ENCODE measurements at regions of chr18 and their contacts with region 1.

Region 1: DNA sequence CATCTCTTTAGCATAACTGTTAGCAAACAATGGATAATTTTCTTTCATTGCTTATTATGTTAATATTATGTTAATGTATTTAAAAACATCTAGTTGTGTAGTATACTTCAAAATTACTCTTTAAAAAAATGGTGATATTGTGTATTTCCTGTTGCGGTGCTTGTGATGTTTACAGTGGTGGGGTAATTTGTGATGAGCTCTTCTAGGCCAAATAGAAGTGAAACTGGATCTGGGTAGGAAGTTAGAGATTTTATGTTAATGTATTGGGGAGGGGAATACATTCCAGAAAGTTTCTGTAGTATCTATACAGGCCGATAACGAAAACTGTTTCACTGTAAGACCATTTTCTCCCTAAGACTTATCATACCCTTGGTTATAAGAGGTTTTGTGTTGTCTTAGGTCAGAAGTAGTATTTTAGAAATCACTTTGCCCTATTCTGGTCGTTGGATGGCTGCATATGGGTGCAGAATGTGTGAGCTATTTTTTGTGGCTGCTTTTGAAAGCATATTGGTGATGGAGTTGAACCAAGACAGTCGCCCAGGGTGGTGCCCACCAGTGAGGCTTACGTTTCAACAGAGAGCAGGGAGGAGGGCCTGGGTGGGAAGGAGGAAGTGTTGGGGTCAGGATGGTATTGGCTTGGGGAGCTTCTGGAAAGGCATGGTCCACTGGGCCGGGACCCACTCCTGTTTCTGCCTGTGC is 5.8 kb downstream of the TSHZ1 start:
- DNase-seq: no peak
- ATAC-seq: no peak
- H3K4me3 ChIP-seq: peak overlapping the region in 1 of 12 donors; percentile 25
- H3K27ac ChIP-seq: peak overlapping the region in 11 of 12 donors; percentile 6 to 91 (median 37)
- H3K4me1 ChIP-seq: peaks cover 19 to 89% (median 76%) of the 10 kb centered on the region in 12 donors
- H3K27me3 ChIP-seq: no peaks in the 10 kb centered on the region
- CTCF ChIP-seq: no peak
- POLR2A ChIP-seq: no peak

Region 2: GRCh38 chr18:74446631-74447403 is 769.5 kb before region 1 on chr18:
- intact Hi-C with region 1: no loop called
- DNase-seq: no peak
- ATAC-seq: no peak
- H3K4me3 ChIP-seq: no peak overlapping the region
- H3K27ac ChIP-seq: no peak overlapping the region
- H3K4me1 ChIP-seq: peaks cover 0 to 27% (median 13%) of the 10 kb centered on the region in 12 donors
- H3K27me3 ChIP-seq: no peaks in the 10 kb centered on the region
- CTCF ChIP-seq: no peak
- POLR2A ChIP-seq: no peak

Region 3: GRCh38 chr18:75238100-75238499 is 21.7 kb after region 1 on chr18:
- intact Hi-C with region 1: no loop called
- DNase-seq: no peak
- ATAC-seq: no peak
- H3K4me3 ChIP-seq: no peak overlapping the region
- H3K27ac ChIP-seq: no peak overlapping the region
- H3K4me1 ChIP-seq: peaks cover 0 to 33% (median 4%) of the 10 kb centered on the region in 12 donors
- H3K27me3 ChIP-seq: no peaks in the 10 kb centered on the region
- CTCF ChIP-seq: no peak
- POLR2A ChIP-seq: no peak

Region 4: GRCh38 chr18:75267643-75268363 is 51.4 kb after region 1 on chr18:
- intact Hi-C with region 1: loop called in 1 of 10 experiments (anchors 5 kb)
- DNase-seq: no peak
- ATAC-seq: peak in 2 of 4 donors; percentile 29 to 41
- H3K4me3 ChIP-seq: no peak overlapping the region
- H3K27ac ChIP-seq: peak overlapping the region in 1 of 12 donors; percentile 6
- H3K4me1 ChIP-seq: peaks cover 0 to 43% (median 16%) of the 10 kb centered on the region in 12 donors
- H3K27me3 ChIP-seq: no peaks in the 10 kb centered on the region
- CTCF ChIP-seq: no peak
- POLR2A ChIP-seq: no peak

Measured in heart left ventricle (tissue), 16 donors.